Activated CD8-positive, alpha-beta T cell treated with anti-CD3 and anti-CD28 coated beads, Interleukin-2, amount 10 ng/mL, durations not matched to agents 7 days and 5 days (primary cell): ENCODE measurements at regions of chr7 and their contacts with region 1.

Region 1: DNA sequence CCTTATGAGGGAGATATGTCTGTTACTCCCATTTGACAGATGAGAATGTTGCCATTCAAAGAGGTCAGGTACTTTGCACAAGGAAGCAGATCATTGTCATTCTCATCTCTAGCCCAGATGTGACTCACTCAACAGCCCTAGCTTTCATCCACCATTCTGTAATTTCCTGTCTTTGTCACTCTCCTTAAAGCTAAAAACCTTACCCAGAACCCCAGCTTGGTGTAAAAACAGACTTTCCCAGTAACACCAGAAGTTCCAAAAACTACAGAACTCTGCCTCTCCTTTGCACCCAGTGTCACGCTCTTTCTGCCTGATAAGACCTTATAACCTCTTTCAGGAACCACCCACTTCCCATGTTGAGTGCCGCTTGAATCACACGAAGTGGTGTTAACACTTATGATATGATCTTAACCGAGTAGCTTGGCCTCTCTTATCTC is 89.1 kb upstream of the SP4 start:
- DNase-seq: peak; percentile 83
- ATAC-seq: peak; percentile 98
- H3K4me3 Mint-ChIP-seq: peak overlapping the region; percentile 19
- H3K27ac Mint-ChIP-seq: peak overlapping the region; percentile 92
- H3K4me1 Mint-ChIP-seq: peaks cover 62% of the 10 kb centered on the region
- H3K27me3 Mint-ChIP-seq: no peaks in the 10 kb centered on the region

Region 2: DNA sequence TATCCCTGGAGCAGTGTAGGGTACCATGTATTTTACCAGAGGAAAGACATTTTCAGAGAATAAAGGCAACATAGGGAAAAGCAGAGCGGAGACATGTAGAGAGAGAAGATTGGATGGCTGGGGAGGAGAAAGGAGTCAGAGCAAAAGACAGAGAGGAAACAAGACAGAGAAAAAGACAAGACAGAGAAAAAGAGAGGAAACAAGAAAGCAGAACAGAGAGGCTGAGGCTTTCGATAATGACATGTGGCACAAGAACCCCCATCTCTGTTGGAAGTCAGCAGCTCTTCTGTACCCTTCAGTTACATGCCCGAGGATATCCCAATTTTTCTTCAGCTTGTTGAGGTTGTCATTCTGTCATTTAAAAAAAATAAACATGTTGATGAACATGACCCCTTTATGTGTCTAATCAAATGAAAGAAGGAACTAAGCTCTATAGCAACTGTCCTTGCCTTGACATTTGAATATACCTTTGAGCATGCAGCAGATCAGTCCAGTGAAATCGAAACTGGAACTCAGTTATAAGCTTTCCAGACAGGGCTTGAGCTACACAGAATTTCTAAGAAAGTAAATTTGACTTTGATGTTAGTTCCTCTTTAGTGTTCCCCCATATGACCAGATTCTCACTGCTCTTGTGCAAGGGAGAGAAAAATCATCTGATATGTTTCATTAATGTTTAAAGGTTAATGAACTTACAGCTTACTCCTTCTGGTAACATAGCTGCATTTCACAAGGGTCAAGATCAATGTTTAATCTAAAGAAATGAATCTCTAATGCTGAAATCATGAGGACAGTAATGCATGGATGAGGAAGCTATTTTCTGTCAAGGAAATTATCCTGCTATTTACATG is 14.0 kb after region 1 on chr7:
- CTCF ChIA-PET with region 1: interaction called, 16 read pairs
- POLR2A ChIA-PET with region 1: interaction called, 14 read pairs
- DNase-seq: peak; percentile 54
- ATAC-seq: peak; percentile 86
- H3K4me3 Mint-ChIP-seq: peak overlapping the region; percentile 63
- H3K27ac Mint-ChIP-seq: peak overlapping the region; percentile 96
- H3K4me1 Mint-ChIP-seq: peaks cover 70% of the 10 kb centered on the region
- H3K27me3 Mint-ChIP-seq: no peaks in the 10 kb centered on the region